Activated naive CD8-positive, alpha-beta T cell treated with anti-CD3 and anti-CD28 coated beads, Interleukin-2, amount 10 ng/mL, durations not matched to agents 7 days and 5 days (primary cell): ENCODE measurements at regions of chr9 and their contacts with region 1.

Region 1: DNA sequence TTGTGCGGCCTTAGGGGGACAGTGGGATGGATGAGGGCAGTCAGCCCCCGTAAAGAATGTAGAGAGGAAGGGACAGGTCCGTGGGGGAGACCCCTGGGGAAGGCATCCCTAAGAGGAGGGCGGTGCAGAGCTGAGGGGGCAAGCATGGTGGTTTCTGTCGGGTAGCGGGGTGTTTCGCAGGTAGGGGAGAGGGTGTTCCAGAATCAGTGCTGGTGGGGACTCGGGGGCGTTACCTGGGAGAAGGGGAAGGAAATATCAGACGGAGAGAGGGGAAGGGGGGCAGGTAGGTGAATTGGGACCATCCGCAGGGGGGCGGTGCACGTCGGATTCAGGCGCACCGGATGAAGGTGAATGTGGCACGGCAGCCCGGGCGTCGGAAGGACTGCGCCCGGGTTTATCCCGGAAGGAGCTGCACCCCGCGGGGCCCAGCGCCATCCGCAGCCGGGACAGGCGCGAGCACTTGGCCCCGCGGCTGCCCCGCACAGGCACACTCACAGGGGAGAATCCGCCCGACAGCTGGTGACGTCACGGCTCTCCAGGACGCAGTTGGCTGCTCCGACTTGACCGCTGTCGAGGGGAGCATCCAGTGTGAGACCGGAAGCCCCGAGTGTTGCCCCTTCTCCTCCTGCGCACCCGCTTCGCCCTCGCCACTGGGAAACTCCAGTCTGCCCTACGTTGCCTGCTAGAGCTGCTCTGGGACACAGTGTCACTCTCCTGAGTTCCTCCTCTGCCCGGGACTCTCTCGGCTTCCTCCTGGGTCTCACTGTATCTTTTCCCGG is 1.3 kb downstream of the CD72 start:
- DNase-seq: peak; percentile 79
- ATAC-seq: peak; percentile 62
- H3K4me3 Mint-ChIP-seq: peak overlapping the region; percentile 88
- H3K27ac Mint-ChIP-seq: peak overlapping the region; percentile 96
- H3K4me1 Mint-ChIP-seq: peaks cover 52% of the 10 kb centered on the region
- H3K27me3 Mint-ChIP-seq: no peaks in the 10 kb centered on the region

Region 2: DNA sequence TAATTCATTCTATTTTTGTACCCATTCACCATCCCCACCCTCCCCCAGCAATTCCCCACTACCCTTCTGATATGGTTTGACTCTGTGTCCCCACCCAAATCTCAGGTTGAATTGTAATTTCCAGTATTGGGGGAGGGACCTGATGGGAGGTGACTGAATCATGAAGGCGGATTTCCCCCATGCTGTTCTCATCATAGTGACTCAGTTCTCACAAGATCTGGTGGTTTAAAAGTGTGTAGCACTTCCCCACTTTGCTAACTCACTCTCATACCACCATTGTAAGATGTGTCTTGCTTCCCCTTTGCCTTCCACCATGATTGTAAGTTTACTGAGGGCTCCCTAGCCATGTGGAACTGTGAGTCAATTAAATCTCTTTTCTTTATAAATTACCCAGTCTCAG is 37.7 kb before region 1 on chr9:
- POLR2A ChIA-PET with region 1: no interaction called
- DNase-seq: no peak
- ATAC-seq: no peak
- H3K4me3 Mint-ChIP-seq: no peak overlapping the region
- H3K27ac Mint-ChIP-seq: no peak overlapping the region
- H3K4me1 Mint-ChIP-seq: no peaks in the 10 kb centered on the region
- H3K27me3 Mint-ChIP-seq: no peaks in the 10 kb centered on the region

Region 3: DNA sequence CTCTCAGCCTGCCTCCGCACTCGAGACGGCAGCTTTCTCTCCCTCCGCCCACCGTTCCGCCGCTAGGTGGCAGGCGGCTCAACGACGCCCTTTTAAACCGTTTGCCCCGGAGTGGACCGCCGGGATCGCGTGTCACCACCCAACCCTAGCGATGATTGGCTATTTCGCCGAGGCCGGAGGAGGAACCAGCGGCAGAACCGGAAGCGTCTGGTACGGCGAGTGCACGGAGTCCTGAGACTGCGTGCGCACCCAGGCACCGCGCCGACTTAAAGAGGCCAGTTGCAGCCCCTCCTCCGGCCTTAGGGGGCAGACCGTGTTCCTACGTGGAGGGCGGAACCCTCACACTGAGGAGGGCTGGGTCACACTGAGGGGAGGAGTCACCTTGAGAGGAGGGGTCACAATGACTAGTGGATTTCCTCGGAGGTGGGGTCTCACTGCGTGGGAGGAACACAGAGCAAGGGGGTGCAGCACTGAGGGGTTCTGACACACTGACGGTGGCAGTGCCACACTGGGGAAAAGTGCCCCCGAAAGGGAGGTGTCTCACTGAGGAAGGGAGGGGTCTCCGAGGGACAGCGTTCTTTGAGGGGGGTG is 12.8 kb before region 1 on chr9:
- POLR2A ChIA-PET with region 1: interaction called, 15 read pairs
- DNase-seq: peak; percentile 96
- ATAC-seq: peak; percentile 86
- H3K4me3 Mint-ChIP-seq: peak overlapping the region; percentile 93
- H3K27ac Mint-ChIP-seq: peak overlapping the region; percentile 97
- H3K4me1 Mint-ChIP-seq: peaks cover 31% of the 10 kb centered on the region
- H3K27me3 Mint-ChIP-seq: no peaks in the 10 kb centered on the region

Region 4: DNA sequence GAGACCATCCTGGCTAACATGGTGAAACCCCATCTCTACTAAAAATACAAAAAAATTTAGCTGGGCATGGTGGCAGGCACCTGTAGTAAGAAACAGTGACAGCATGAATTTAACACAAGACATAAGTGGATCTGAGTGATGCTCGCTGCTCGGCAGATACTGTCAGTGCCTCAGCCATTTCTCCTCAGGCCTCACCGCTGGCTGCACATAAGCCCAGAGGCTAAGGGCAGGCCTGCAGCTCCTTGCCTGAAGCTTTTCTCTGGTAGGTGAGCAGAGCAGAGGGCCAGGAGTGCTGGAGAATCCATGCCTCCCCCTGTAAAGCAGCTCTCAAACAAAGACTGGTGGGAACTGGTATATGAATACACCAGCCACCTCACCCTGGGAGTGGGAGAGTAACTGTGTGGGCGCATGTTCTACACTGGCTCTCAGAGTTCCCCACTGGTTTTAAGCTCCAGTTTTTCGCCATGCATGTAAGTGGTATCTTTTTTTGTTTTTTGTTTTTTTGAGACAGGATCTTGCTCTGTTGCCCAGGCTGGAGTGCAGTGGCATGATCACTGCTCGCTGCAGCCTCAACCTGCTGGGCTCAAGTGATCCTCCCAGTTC is 11.6 kb after region 1 on chr9:
- POLR2A ChIA-PET with region 1: interaction called, 14 read pairs
- DNase-seq: no peak
- ATAC-seq: no peak
- H3K4me3 Mint-ChIP-seq: no peak overlapping the region
- H3K27ac Mint-ChIP-seq: no peak overlapping the region
- H3K4me1 Mint-ChIP-seq: peaks cover 10% of the 10 kb centered on the region
- H3K27me3 Mint-ChIP-seq: no peaks in the 10 kb centered on the region

Region 5: GRCh38 chr9:35639631-35640030 is 22.8 kb after region 1 on chr9:
- POLR2A ChIA-PET with region 1: interaction called, 166 read pairs
- DNase-seq: no peak
- ATAC-seq: peak; percentile 31
- H3K4me3 Mint-ChIP-seq: peak overlapping the region; percentile 56
- H3K27ac Mint-ChIP-seq: peak overlapping the region; percentile 87
- H3K4me1 Mint-ChIP-seq: peaks cover 55% of the 10 kb centered on the region
- H3K27me3 Mint-ChIP-seq: no peaks in the 10 kb centered on the region

Region 6: GRCh38 chr9:35657546-35658136 is 40.8 kb after region 1 on chr9 and contains the start of gene RMRP:
- POLR2A ChIA-PET with region 1: interaction called, 14 read pairs
- DNase-seq: peak; percentile 84
- ATAC-seq: peak; percentile 90
- H3K4me3 Mint-ChIP-seq: peak within 1 kb of the TSS; percentile 92
- H3K27ac Mint-ChIP-seq: peak within 1 kb of the TSS; percentile 98
- H3K4me1 Mint-ChIP-seq: peaks cover 57% of the 10 kb centered on the region
- H3K27me3 Mint-ChIP-seq: no peaks in the 10 kb centered on the region
- total RNA-seq, gene RMRP: 10,447 to 10,452 TPM

Region 7: GRCh38 chr9:35664531-35665470 is 47.9 kb after region 1 on chr9 and contains the start of gene ARHGEF39:
- POLR2A ChIA-PET with region 1: interaction called, 21 read pairs
- DNase-seq: peak; percentile 87
- ATAC-seq: peak; percentile 87
- H3K4me3 Mint-ChIP-seq: peak within 1 kb of the TSS; percentile 91
- H3K27ac Mint-ChIP-seq: peak within 1 kb of the TSS; percentile 87
- H3K4me1 Mint-ChIP-seq: peaks cover 53% of the 10 kb centered on the region
- H3K27me3 Mint-ChIP-seq: no peaks in the 10 kb centered on the region
- total RNA-seq, gene ARHGEF39: 13.1 to 13.4 TPM

Region 8: DNA sequence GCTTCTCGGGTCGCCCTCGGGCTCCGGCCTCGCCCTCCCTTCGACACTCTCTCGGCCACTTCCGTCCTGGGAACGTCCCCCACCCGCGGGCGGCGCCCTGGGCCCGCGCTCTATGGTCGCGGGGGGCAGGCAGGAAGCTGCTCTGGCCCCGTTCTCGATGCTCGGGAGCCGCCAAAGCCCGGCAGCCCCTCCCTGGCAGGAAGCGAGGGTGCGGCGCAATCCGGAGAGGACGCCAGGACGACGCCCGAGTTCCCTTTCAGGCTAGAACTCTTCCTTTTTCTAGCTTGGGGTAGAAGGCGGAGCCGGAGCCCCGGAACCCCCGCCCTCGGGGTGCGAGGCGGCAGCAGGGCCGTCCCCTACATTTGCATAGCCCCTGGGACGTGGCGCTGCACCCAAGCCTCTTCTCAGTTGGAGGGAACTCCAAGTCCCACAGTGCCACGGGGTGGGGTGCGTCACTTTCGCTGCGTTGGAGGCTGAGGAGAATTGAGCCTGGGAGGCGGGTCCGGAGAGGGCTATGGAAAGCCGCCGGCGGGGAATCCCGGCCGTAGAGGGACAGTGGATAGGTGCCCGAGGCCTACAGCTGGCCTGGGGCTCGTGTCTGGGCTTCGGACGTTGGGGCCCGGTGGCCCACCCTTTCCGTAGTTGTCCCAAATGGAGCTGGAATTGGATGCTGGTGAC is 115.4 kb after region 1 on chr9 and contains the starts of genes CREB3 and TLN1:
- POLR2A ChIA-PET with region 1: interaction called, 14 read pairs
- DNase-seq: peak; percentile 95
- ATAC-seq: peak; percentile 91
- H3K4me3 Mint-ChIP-seq: no peak within 1 kb of the TSS
- H3K27ac Mint-ChIP-seq: peak within 1 kb of the TSS; percentile 92
- H3K4me1 Mint-ChIP-seq: peaks cover 14% of the 10 kb centered on the region
- H3K27me3 Mint-ChIP-seq: no peaks in the 10 kb centered on the region
- total RNA-seq, gene CREB3: 21.1 to 24.1 TPM
- total RNA-seq, gene TLN1: 381 to 388 TPM